ENCODE measurements at regions of chr1 and their contacts with region 1.

Region 1: DNA sequence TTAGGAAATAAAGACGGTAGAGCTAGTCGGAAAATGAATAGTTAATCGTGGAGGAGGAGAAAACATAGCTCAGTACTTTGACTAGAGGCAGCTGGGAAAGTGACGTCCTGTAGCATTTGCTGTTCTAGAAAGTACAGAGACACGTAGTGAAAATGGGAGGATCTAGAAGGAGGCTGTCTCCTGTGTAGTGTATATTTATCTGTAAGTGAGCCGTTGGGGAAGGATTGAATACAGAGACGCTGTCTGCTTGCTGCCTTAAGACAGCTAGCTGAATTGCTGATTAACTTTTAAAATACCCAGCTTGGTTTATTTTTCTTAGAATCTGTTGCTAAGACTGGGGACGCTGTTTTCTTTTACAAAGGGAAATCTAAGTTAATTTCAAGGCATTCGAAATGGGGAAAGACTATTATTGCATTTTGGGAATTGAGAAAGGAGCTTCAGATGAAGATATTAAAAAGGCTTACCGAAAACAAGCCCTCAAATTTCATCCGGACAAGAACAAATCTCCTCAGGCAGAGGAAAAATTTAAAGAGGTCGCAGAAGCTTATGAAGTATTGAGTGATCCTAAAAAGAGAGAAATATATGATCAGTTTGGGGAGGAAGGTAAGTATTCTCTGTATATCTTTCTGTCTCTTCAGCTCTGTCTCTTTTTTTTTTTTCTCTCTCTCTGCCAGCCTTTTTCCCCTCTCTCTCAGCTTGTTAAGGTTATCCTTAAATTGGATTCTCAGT is at the start of gene DNAJB4:
- DNase-seq: peak; percentile 70
- H3K4me3 Mint-ChIP-seq: peak within 1 kb of the TSS; percentile 87
- H3K27ac Mint-ChIP-seq: peak within 1 kb of the TSS; percentile 100
- H3K4me1 Mint-ChIP-seq: peaks cover 38% of the 10 kb centered on the region
- H3K27me3 Mint-ChIP-seq: peaks cover 3% of the 10 kb centered on the region
- total RNA-seq, gene DNAJB4: 9.1 to 10.8 TPM

Region 2: GRCh38 chr1:77961392-77961791 is 43.5 kb before region 1 on chr1:
- CTCF ChIA-PET with region 1: no interaction called
- POLR2A ChIA-PET with region 1: interaction called, 4 read pairs
- intact Hi-C with region 1: loop called (anchors 5 kb)
- DNase-seq: no peak
- H3K4me3 Mint-ChIP-seq: no peak overlapping the region
- H3K27ac Mint-ChIP-seq: peak overlapping the region; percentile 58
- H3K4me1 Mint-ChIP-seq: peaks cover 37% of the 10 kb centered on the region
- H3K27me3 Mint-ChIP-seq: no peaks in the 10 kb centered on the region

Region 3: GRCh38 chr1:78040484-78041089 is 35.7 kb after region 1 on chr1:
- CTCF ChIA-PET with region 1: no interaction called
- POLR2A ChIA-PET with region 1: interaction called, 20 read pairs
- intact Hi-C with region 1: loop called (anchors 2 kb)
- DNase-seq: no peak
- H3K4me3 Mint-ChIP-seq: no peak overlapping the region
- H3K27ac Mint-ChIP-seq: no peak overlapping the region
- H3K4me1 Mint-ChIP-seq: peaks cover 18% of the 10 kb centered on the region
- H3K27me3 Mint-ChIP-seq: peaks cover 24% of the 10 kb centered on the region

Region 4: DNA sequence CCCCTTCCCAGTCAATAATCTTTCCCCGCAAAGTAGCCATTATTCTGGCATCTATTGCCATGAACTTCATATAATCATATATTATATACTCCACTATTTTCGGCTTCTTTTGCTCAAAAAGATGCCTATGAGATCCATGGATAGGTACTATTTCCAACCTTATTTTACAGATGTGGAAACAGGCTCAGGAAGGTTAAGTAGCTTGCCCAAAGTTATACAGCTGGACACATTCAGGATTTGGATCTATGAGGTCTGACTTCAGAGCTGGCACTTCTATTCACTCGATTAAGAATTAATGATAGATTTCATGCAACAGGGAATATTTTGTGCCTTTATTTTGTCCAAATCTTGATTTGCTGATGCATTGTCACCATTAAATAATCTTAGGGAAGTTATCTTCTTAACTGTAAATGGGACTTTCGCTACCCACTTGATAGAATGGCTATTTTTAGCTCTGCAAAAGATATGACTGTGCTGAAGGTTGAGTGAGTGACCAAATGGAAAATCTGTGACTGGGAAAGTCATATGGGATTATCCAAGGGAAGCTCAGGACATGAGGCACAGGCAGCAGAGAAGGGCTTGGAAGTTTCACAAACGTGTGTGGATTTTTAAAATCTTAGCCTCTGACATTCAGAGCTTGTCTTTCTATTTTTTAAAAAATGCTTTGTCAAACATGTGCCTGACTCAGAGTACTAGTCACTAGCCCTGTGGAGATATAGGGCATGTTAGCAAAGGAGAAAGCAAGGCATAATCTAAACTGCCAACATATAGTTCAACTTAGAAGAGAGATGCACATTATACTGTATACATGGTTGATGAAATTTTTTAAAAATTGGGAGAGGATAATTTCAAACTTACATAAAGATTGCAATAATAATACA is 77.3 kb after region 1 on chr1:
- CTCF ChIA-PET with region 1: no interaction called
- POLR2A ChIA-PET with region 1: interaction called, 4 read pairs
- intact Hi-C with region 1: loop called (anchors 2 kb)
- DNase-seq: no peak
- H3K4me3 Mint-ChIP-seq: no peak overlapping the region
- H3K27ac Mint-ChIP-seq: no peak overlapping the region
- H3K4me1 Mint-ChIP-seq: peaks cover 20% of the 10 kb centered on the region
- H3K27me3 Mint-ChIP-seq: peaks cover 9% of the 10 kb centered on the region

Region 5: DNA sequence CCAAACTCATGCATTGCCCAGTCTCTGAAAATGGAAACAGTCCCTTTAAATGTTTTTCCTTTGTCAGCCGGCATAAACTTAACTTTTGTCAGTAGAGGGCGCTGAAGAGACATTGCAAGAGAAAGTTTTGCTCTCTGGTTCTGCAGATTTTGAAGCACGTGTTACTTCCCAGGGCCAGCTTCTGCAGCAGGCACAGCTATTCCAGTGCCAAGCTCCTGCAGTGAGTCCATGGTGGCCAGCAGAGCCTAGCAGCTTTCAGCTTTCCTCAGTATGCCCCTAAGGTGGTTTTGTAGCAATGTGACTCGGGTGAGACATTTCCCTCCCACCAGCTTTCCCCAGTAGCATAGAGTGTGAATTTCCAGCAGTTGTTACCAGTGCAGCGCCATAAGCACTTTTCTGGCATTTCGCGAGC is 612.7 kb after region 1 on chr1:
- CTCF ChIA-PET with region 1: no interaction called
- POLR2A ChIA-PET with region 1: no interaction called
- intact Hi-C with region 1: loop called (anchors 2 kb)
- DNase-seq: peak; percentile 44
- H3K4me3 Mint-ChIP-seq: no peak overlapping the region
- H3K27ac Mint-ChIP-seq: no peak overlapping the region
- H3K4me1 Mint-ChIP-seq: peaks cover 34% of the 10 kb centered on the region
- H3K27me3 Mint-ChIP-seq: no peaks in the 10 kb centered on the region

Measured in activated CD4-positive, alpha-beta memory T cell treated with anti-CD3 and anti-CD28 coated beads for 36 hours (primary cell).